Posterior cingulate gyrus (tissue), 11 donors: ENCODE measurements at regions of chr3 and their contacts with region 1.

Region 1: DNA sequence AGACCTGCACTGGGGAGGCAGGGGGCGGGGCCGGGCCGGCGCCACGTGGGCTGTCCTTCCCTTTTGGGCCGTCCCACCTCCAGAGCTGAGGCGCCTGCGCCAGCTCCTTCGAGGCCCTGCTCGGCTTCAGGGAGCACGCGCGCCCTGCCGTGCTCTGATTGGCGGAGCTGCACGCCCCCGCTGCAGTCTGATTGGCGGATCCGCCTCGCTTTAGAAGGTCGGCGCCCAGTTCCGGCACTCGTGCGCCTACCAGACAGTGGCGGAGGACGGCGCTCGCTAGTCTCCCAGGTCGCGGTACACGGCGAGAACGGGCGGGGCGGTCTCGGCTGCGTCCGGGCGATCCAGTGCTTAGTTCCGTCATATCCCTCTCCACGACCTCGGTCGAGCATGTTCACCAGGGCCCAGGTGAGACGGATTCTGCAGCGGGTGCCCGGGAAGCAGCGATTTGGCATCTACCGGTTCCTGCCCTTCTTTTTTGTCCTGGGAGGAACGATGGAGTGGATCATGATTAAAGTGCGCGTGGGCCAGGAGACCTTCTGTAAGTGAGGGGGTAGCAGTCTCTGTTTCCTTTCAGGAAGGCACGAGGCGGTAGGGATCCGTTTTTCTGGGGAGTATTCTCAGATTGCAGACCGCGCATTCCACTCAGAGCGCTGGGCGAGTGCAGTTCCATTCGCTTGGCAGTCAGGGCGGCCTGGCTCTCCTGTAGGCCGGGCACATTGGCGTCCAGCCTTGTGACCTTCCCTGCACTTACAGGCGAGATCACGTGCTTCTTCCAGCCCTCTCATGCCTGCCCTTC is at the start of gene UQCC5:
- DNase-seq: peak; percentile 94 to 100 (median 96)

Region 2: DNA sequence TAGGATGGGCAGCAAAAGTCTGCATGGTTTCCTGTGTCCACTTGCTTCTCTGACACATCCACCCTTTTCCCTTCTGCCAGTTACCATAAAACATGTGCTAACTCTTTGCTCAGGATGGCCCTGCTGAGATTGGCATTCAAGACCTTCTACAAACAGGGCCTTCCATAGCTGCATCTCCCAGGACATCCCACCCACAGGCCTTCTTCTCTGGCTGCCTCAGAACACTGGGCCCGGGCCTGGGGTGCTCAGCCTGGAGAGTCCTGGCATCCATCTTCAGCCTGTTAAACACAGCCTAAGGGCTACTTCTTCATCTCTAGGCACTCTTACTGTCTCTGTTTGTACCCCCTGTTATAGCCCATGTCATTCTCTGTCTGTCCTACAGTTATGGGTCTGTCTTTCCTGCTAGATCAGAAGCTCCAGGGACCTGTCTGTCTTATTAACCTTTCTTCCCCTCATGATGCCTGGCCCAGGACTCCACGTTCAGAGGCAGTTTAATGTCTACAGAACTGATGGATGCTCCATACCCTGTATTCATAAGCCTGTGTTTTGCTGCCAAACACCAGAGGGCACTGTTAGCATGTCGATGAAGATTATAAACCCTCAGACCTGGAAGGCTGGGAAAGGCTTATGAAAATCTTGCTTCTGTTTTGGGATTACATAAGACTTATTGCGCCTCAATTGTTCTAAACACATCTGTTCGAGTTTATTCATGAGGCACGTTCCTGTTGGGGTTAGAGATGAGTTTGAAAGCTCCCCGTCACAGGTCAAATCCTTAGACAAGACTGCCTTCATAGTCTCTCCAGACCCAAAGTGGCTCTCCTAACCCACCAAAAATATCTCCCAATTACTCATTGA is 108.2 kb before region 1 on chr3:
- intact Hi-C with region 1: no loop called
- DNase-seq: peak in 7 of 10 donors; percentile 55 to 87 (median 65)

Region 3: GRCh38 chr3:52471371-52472238 is 65.0 kb before region 1 on chr3:
- intact Hi-C with region 1: loop called (anchors 2 kb)
- DNase-seq: peak in 7 of 10 donors; percentile 55 to 93 (median 67)

Region 4: DNA sequence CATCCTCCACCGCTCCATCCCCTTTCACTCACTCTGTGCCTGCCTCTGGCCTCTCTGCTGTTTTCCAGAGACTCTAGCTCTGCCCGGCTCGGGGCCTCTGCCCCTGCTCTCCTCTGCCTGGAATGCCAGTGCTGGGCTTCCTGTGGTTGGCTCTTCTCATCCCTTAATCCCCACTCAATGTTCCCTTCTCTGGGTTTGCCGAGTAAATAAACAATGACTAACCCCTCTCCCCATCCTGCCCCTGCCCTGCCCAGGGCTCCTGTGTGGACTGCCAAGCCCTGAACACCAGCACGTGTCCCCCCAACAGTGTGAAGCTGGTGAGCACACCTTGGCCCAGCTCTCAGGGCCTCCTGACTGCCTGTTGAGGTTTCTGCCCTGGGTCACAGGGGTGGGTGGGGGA is 29.2 kb before region 1 on chr3:
- intact Hi-C with region 1: no loop called
- DNase-seq: no peak

Region 5: DNA sequence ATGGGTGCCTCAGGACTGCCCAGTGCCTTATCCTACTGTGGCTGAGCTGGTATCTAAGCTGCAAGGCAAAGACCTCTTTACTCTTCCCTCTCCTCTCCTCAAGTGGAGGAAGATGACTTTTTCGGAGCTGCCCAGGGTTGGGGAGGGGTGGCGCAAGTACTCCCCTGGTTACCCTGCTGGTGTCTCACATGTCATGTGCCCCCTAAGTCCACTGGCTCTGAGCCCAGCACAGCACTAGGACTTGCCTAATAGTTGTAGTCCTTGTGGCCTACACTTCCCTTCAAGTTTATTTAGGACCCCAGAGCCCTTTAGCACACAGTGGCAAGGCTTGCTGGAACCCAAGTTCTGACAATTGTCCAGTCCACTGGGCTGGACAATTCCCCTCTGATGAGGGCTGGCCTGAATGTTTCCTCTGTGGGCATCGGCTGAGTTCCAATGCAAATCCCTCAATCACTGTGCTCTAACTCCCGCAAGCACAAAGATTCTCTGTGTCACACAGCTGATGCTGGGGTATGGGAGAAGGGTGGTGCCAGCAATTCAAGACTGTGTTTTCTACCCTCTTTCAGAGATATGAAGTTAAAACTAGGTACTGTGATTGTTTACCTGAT is 60.2 kb after region 1 on chr3:
- intact Hi-C with region 1: loop called (anchors 2 kb)
- DNase-seq: peak in 9 of 10 donors; percentile 58 to 96 (median 77)